B cell (primary cell): ENCODE measurements at regions of chr22 and their contacts with region 1.

Region 1: GRCh38 chr22:21735200-21736076 is at the start of gene YPEL1:
- DNase-seq: peak; percentile 98
- ATAC-seq: peak; percentile 86
- H3K4me3 ChIP-seq: peak within 1 kb of the TSS; percentile 76 to 94 (median 93)
- H3K4me3 Mint-ChIP-seq: peak within 1 kb of the TSS; percentile 88
- H3K27ac ChIP-seq: peak within 1 kb of the TSS; percentile 93 to 94
- H3K27ac Mint-ChIP-seq: peak within 1 kb of the TSS; percentile 97
- H3K4me1 ChIP-seq: peaks cover 21 to 47% of the 10 kb centered on the region in 2 donors
- H3K4me1 Mint-ChIP-seq: peaks cover 40% of the 10 kb centered on the region
- H3K27me3 ChIP-seq: no peaks in the 10 kb centered on the region
- H3K27me3 Mint-ChIP-seq: no peaks in the 10 kb centered on the region
- CTCF ChIP-seq: no peak
- total RNA-seq, gene YPEL1: 14.9 and 17.3 TPM in 2 replicates

Region 2: DNA sequence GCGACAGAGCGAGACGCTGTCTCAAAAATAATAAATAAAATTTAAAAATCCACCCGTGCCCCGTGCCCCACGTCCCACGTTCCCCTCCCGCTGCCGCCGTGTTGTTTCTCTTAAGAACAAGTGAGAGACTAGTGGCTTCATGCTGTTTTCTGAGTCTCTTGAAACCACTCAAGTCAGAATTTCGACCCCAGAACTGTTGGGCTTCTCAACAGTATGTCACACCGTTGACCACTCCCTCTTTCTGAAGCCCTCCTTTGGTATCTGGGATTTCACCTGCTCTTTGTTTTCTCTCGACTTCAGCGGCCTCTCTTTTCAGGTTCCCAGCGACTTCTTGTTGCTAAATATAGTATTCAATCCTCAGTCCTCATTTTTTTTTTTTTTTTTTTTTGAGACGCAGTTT is 68.7 kb before region 1 on chr22:
- CTCF ChIA-PET with region 1: no interaction called
- POLR2A ChIA-PET with region 1: interaction called, 3 read pairs
- intact Hi-C with region 1: loop called (anchors 1 kb)
- DNase-seq: no peak
- ATAC-seq: no peak
- H3K4me3 ChIP-seq: peak overlapping the region in 4 of 5 experiments; percentile 77 to 96 (median 90)
- H3K4me3 Mint-ChIP-seq: peak overlapping the region; percentile 96
- H3K27ac ChIP-seq: peak overlapping the region in 1 of 2 donors; percentile 92
- H3K27ac Mint-ChIP-seq: peak overlapping the region; percentile 69
- H3K4me1 ChIP-seq: peaks cover 8 to 17% of the 10 kb centered on the region in 2 donors
- H3K4me1 Mint-ChIP-seq: peaks cover 28% of the 10 kb centered on the region
- H3K27me3 ChIP-seq: no peaks in the 10 kb centered on the region
- H3K27me3 Mint-ChIP-seq: no peaks in the 10 kb centered on the region
- CTCF ChIP-seq: no peak

Region 3: DNA sequence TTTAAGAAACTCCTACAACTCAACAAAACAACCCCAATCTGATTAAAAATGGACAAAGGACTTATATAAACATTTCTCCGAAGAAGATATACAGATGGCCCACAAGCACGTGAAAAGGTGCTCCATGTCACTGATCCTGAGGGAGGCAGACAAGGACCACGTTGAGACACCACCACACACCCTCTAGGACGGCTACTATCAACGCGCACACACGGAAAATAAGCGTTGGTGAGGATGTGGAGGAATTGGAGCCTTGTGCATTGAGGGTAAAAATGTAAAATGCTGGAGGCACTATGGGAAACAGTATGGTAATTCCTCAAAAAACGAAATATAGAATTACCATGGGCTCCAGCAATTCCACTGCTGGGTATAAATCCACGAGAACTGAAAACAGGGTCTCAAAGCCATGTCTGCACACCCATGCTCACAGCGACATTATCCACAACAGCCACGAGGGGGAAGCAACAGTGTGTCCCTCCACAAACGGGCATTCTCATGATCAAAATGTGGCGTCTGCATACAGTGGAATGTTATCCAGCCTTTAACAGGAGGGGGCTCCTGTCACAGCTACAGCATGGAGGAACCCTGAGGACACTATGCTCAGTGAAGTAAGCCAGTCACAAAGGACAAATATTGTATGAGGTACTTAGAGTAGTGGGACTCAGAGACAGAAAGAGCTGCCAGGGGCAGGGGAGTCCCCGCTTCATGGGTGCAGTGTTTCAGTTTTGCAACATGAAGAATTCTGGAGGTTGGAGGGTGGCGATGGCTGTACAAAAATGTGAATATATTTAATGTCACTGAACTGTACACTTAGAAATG is 22.3 kb before region 1 on chr22:
- CTCF ChIA-PET with region 1: no interaction called
- POLR2A ChIA-PET with region 1: no interaction called
- intact Hi-C with region 1: loop called (anchors 2 kb)
- DNase-seq: peak; percentile 75
- ATAC-seq: peak; percentile 94
- H3K4me3 ChIP-seq: no peak overlapping the region
- H3K4me3 Mint-ChIP-seq: peak overlapping the region; percentile 49
- H3K27ac ChIP-seq: no peak overlapping the region
- H3K27ac Mint-ChIP-seq: peak overlapping the region; percentile 50
- H3K4me1 ChIP-seq: peaks cover 0 to 7% of the 10 kb centered on the region in 2 donors
- H3K4me1 Mint-ChIP-seq: peaks cover 8% of the 10 kb centered on the region
- H3K27me3 ChIP-seq: no peaks in the 10 kb centered on the region
- H3K27me3 Mint-ChIP-seq: no peaks in the 10 kb centered on the region
- CTCF ChIP-seq: peak; percentile 83

Region 4: GRCh38 chr22:21867528-21868266 is 132.3 kb after region 1 on chr22 and contains the start of gene MAPK1:
- CTCF ChIA-PET with region 1: no interaction called
- POLR2A ChIA-PET with region 1: no interaction called
- intact Hi-C with region 1: loop called (anchors 1 kb)
- DNase-seq: peak; percentile 98
- ATAC-seq: peak; percentile 90
- H3K4me3 ChIP-seq: peak within 1 kb of the TSS; percentile 64 to 93 (median 91)
- H3K4me3 Mint-ChIP-seq: peak within 1 kb of the TSS; percentile 94
- H3K27ac ChIP-seq: peak within 1 kb of the TSS; percentile 93 to 100
- H3K27ac Mint-ChIP-seq: peak within 1 kb of the TSS; percentile 93
- H3K4me1 ChIP-seq: peaks cover 39 to 40% of the 10 kb centered on the region in 2 donors
- H3K4me1 Mint-ChIP-seq: peaks cover 45% of the 10 kb centered on the region
- H3K27me3 ChIP-seq: no peaks in the 10 kb centered on the region
- H3K27me3 Mint-ChIP-seq: no peaks in the 10 kb centered on the region
- CTCF ChIP-seq: peak; percentile 39
- total RNA-seq, gene MAPK1: 145 and 155 TPM in 2 replicates

Region 5: GRCh38 chr22:21952586-21953571 is 217.4 kb after region 1 on chr22 and contains the start of gene PPM1F:
- CTCF ChIA-PET with region 1: interaction called, 5 read pairs
- POLR2A ChIA-PET with region 1: no interaction called
- intact Hi-C with region 1: loop called (anchors 2 kb)
- DNase-seq: peak; percentile 94
- ATAC-seq: peak; percentile 85
- H3K4me3 ChIP-seq: peak within 1 kb of the TSS; percentile 45 to 81 (median 74)
- H3K4me3 Mint-ChIP-seq: peak within 1 kb of the TSS; percentile 92
- H3K27ac ChIP-seq: peak within 1 kb of the TSS in 1 of 2 donors; percentile 53
- H3K27ac Mint-ChIP-seq: peak within 1 kb of the TSS; percentile 82
- H3K4me1 ChIP-seq: peaks cover 10 to 12% of the 10 kb centered on the region in 2 donors
- H3K4me1 Mint-ChIP-seq: peaks cover 19% of the 10 kb centered on the region
- H3K27me3 ChIP-seq: no peaks in the 10 kb centered on the region
- H3K27me3 Mint-ChIP-seq: no peaks in the 10 kb centered on the region
- CTCF ChIP-seq: peak; percentile 80
- total RNA-seq, gene PPM1F: 30.0 and 33.1 TPM in 2 replicates